ENCODE measurements at regions of chr7 and their contacts with region 1.

Region 1: DNA sequence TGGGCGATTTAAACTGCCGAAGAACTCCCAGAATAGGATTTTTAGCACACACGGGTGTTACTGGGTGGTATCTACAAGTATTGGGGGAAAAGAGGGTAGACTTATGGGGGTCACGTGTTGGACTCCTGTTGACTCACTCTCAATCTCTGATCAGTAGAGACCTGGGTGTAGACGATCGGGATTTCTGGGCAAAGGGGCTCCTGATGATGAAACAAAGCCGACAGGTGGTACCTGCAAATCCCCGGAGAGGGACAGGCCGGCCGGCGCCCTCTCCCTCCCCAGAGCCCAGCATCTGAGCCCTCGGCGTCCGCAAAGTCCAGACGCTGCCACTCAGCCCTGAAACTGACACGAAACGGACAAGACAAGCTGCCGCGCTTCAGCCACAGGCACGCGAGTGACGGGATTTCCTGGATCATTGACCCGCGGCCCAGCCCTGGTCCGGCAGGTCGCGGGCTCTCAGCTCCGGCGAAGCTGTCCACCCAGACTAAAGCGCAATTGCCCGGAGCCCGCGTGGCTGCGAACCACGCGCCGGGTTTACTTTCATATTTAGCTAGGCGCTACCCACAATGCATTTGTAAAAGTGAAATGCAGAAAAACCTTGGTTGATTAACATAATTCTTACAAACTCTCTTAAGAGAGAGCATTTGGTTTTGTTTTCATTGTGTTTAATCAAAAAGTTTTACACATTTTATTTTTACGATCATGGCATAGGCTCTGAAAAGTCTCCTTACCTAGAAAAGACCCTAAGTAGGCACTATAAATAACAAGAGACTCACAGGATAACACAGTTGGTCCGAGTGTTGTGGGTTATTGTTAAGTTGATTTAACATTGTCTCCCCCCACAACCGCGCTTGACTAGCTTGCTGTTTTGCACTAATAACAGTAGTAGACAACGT is 56.9 kb upstream of the EZH2 start:
- DNase-seq: peak; percentile 71
- H3K4me3 Mint-ChIP-seq: peak overlapping the region; percentile 91
- H3K27ac Mint-ChIP-seq: peak overlapping the region; percentile 91
- H3K4me1 Mint-ChIP-seq: peaks cover 22% of the 10 kb centered on the region
- H3K27me3 Mint-ChIP-seq: no peaks in the 10 kb centered on the region

Region 2: DNA sequence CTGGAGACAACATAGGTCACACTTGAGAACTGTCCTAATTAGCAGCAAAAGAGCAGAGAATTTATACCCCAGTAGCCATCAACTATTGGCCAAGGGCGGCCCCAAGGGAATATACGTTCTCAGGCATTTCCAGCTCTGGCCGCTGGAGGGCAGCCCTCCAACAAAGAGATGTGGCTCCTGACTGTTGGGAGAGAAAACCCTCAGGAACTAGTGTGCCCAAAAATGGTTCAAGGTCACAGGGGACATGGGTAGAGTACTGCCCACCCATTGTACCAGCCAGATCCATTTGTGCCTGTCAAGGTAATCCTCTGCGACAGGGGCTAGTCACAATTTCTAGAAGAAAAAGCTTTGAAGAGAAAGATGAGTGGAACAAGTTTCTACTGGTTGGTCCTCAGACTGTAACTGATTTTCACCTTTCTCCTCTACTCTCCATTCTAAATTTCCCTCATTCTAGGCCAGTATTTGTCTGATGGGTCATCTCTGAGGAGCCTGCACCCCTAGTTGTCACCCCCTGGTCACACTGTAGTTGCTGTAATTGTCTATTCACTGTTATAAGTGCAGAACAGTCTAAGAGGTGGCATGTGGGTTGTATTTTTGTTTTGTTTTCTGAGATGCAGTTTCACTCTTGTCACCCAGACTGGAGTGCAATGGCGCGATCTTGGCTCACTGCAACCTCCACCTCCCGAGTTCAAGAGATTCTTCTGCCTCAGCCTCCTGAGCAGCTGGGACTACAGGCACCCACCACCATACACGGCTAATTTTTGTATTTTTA is 365.1 kb before region 1 on chr7:
- CTCF ChIA-PET with region 1: interaction called, 13 read pairs
- POLR2A ChIA-PET with region 1: interaction called, 3 read pairs
- DNase-seq: peak; percentile 76
- H3K4me3 Mint-ChIP-seq: no peak overlapping the region
- H3K27ac Mint-ChIP-seq: no peak overlapping the region
- H3K4me1 Mint-ChIP-seq: peaks cover 7% of the 10 kb centered on the region
- H3K27me3 Mint-ChIP-seq: peaks cover 15% of the 10 kb centered on the region

Region 3: GRCh38 chr7:148856891-148857290 is 84.1 kb before region 1 on chr7:
- CTCF ChIA-PET with region 1: interaction called, 16 read pairs
- POLR2A ChIA-PET with region 1: interaction called, 6 read pairs
- DNase-seq: peak; percentile 23
- H3K4me3 Mint-ChIP-seq: no peak overlapping the region
- H3K27ac Mint-ChIP-seq: peak overlapping the region; percentile 56
- H3K4me1 Mint-ChIP-seq: peaks cover 46% of the 10 kb centered on the region
- H3K27me3 Mint-ChIP-seq: no peaks in the 10 kb centered on the region

Region 4: GRCh38 chr7:148914208-148914777 is 26.7 kb before region 1 on chr7:
- CTCF ChIA-PET with region 1: interaction called, 19 read pairs
- POLR2A ChIA-PET with region 1: interaction called, 39 read pairs
- DNase-seq: peak; percentile 56
- H3K4me3 Mint-ChIP-seq: peak overlapping the region; percentile 31
- H3K27ac Mint-ChIP-seq: peak overlapping the region; percentile 85
- H3K4me1 Mint-ChIP-seq: peaks cover 53% of the 10 kb centered on the region
- H3K27me3 Mint-ChIP-seq: peaks cover 3% of the 10 kb centered on the region

Region 5: GRCh38 chr7:148962823-148963582 is 22.1 kb after region 1 on chr7:
- CTCF ChIA-PET with region 1: interaction called, 16 read pairs
- POLR2A ChIA-PET with region 1: interaction called, 15 read pairs
- DNase-seq: peak; percentile 72
- H3K4me3 Mint-ChIP-seq: peak overlapping the region; percentile 85
- H3K27ac Mint-ChIP-seq: peak overlapping the region; percentile 74
- H3K4me1 Mint-ChIP-seq: peaks cover 28% of the 10 kb centered on the region
- H3K27me3 Mint-ChIP-seq: peaks cover 3% of the 10 kb centered on the region

Measured in activated CD4-positive, alpha-beta memory T cell treated with anti-CD3 and anti-CD28 coated beads, Interleukin-2, amount 10 ng/mL, durations not matched to agents 7 days and 5 days (primary cell).